ENCODE measurements at regions of chr10 and their contacts with region 1.

Region 1: GRCh38 chr10:70146489-70147258 is at the start of gene TYSND1:
- DNase-seq: peak; percentile 100
- H3K4me3 ChIP-seq: peak within 1 kb of the TSS; percentile 74
- H3K4me3 Mint-ChIP-seq: peak within 1 kb of the TSS; percentile 98
- H3K27ac Mint-ChIP-seq: peak within 1 kb of the TSS; percentile 68
- H3K4me1 ChIP-seq: peaks cover 15% of the 10 kb centered on the region; the same call in 1 of the 2 replicates
- H3K4me1 Mint-ChIP-seq: peaks cover 8% of the 10 kb centered on the region
- H3K27me3 ChIP-seq: no peaks in the 10 kb centered on the region
- H3K27me3 Mint-ChIP-seq: no peaks in the 10 kb centered on the region
- CTCF ChIP-seq: peak; percentile 67 to 98
- total RNA-seq, gene TYSND1: 29.4 and 29.8 TPM in 2 replicates

Region 2: GRCh38 chr10:69885379-69886013 is 261.2 kb before region 1 on chr10:
- CTCF ChIA-PET with region 1: interaction called, 10 read pairs
- POLR2A ChIA-PET with region 1: no interaction called
- intact Hi-C with region 1: no loop called
- DNase-seq: peak in 1 of 2 experiments; percentile 44
- H3K4me3 ChIP-seq: no peak overlapping the region
- H3K4me3 Mint-ChIP-seq: no peak overlapping the region
- H3K27ac Mint-ChIP-seq: no peak overlapping the region
- H3K4me1 ChIP-seq: no peaks in the 10 kb centered on the region
- H3K4me1 Mint-ChIP-seq: peaks cover 20% of the 10 kb centered on the region
- H3K27me3 ChIP-seq: no peaks in the 10 kb centered on the region
- H3K27me3 Mint-ChIP-seq: peaks cover 10% of the 10 kb centered on the region
- CTCF ChIP-seq: peak; percentile 61 to 76

Region 3: DNA sequence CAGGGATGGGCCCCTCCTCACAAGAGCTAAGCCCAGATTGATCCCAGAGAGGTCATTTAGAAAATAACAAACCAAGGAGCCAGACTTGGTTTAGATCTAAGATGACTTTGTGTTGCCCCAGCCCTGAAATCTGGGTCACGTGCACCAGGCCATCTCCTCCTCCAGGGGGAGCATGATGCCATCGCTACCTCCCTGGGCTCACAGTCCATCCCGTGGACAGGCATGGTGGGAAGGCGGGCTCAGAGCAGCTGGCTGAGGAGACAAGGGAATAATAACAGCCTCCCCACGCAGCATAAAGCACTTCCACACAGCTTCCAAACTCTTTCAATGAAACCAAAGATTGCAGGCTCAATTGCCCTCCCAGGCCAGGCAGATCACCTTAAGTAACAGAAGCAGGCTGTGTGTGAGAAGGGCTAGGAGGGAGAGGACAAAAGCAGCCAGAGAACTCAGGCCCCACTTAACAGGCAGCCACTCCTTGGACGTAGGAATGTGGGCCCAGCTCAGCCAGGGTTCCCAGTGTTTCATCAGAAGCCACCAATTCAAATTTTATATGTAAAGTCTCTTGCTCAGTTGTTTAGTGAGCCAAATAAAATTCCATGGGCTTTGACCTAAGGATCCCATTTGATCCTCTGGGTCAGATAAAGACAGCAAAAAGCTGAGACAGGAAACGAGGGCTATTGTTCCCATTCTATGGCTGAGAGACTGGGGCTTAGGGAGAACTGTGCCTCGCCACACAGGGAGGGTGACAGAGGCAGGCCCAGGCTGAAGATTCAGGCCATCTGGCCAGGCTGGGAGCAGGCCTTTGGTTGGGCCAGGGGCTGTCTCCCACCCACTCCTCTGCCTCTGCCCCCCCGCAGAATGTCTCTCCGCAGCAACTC is 244.8 kb before region 1 on chr10:
- CTCF ChIA-PET with region 1: no interaction called
- POLR2A ChIA-PET with region 1: no interaction called
- intact Hi-C with region 1: no loop called
- DNase-seq: peak; percentile 85 to 88
- H3K4me3 ChIP-seq: no peak overlapping the region
- H3K4me3 Mint-ChIP-seq: no peak overlapping the region
- H3K27ac Mint-ChIP-seq: no peak overlapping the region
- H3K4me1 ChIP-seq: peaks cover 37% of the 10 kb centered on the region
- H3K4me1 Mint-ChIP-seq: peaks cover 29% of the 10 kb centered on the region
- H3K27me3 ChIP-seq: no peaks in the 10 kb centered on the region
- H3K27me3 Mint-ChIP-seq: no peaks in the 10 kb centered on the region
- CTCF ChIP-seq: peak; percentile 91 to 94

Region 4: GRCh38 chr10:70084189-70084588 is 62.5 kb before region 1 on chr10:
- CTCF ChIA-PET with region 1: interaction called, 124 read pairs
- POLR2A ChIA-PET with region 1: interaction called, 20 read pairs
- intact Hi-C with region 1: loop called (anchors 1 kb)
- DNase-seq: peak; percentile 45 to 53
- H3K4me3 ChIP-seq: no peak overlapping the region
- H3K4me3 Mint-ChIP-seq: no peak overlapping the region
- H3K27ac Mint-ChIP-seq: no peak overlapping the region
- H3K4me1 ChIP-seq: peaks cover 46% of the 10 kb centered on the region
- H3K4me1 Mint-ChIP-seq: peaks cover 30% of the 10 kb centered on the region
- H3K27me3 ChIP-seq: no peaks in the 10 kb centered on the region
- H3K27me3 Mint-ChIP-seq: peaks cover 6% of the 10 kb centered on the region
- CTCF ChIP-seq: peak; percentile 25 to 52

Region 5: DNA sequence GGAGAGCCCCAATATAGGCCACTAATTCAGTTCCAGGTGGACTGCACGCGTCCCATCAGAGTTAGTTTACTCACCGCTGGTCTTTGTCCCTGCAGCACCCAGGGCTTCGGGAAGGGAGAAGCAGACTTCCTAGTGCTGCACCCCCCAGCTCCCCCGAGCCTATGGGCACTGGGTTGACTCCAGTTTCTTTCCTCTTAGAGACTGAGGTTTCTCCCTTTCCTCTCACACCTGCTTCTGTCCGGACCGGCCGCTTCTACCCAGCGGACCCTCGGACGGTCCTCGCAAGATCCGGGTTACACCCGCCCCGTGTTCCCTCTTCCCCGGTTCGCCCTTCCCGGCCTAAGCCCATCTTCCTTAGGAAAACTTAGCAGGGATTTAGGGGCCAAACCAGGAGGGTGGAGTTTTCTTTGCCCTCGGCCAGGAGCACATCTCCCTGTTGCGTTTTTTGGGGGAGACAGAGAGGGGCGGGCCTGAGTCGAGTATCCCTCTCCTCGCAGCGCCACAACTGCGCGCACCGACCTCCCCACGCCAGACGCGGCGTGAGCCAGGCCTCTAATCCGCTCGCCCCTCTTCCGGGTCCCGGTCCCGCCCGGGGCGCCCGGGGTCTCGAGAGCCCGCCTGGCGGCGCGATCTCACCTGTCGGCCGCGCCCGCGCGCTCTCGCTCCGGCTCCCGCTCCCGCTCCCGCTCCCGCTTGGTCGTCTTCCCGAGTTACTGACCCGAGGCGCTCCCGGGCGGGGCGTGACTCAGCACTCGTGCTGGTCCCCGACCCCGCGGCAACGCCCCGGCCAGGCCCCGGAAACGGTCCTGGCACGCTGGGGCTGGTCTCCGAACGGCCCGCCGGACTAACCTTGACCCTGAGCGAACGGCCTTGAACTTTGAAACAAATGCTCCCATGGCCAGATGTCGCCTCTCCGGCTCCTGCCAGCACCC is 14.3 kb before region 1 on chr10 and contains the start of gene AIFM2:
- CTCF ChIA-PET with region 1: interaction called, 31 read pairs
- POLR2A ChIA-PET with region 1: interaction called, 18 read pairs
- intact Hi-C with region 1: loop called (anchors 1 kb)
- DNase-seq: peak; percentile 94 to 97
- H3K4me3 ChIP-seq: peak within 1 kb of the TSS; percentile 72
- H3K4me3 Mint-ChIP-seq: peak within 1 kb of the TSS; percentile 81
- H3K27ac Mint-ChIP-seq: peak within 1 kb of the TSS; percentile 78
- H3K4me1 ChIP-seq: peaks cover 21% of the 10 kb centered on the region
- H3K4me1 Mint-ChIP-seq: peaks cover 16% of the 10 kb centered on the region
- H3K27me3 ChIP-seq: no peaks in the 10 kb centered on the region
- H3K27me3 Mint-ChIP-seq: no peaks in the 10 kb centered on the region
- CTCF ChIP-seq: peak in 1 of 2 experiments; percentile 21
- total RNA-seq, gene AIFM2: 29.2 and 31.1 TPM in 2 replicates

Region 6: GRCh38 chr10:70198696-70199466 is 52.2 kb after region 1 on chr10:
- CTCF ChIA-PET with region 1: interaction called, 17 read pairs
- POLR2A ChIA-PET with region 1: interaction called, 6 read pairs
- intact Hi-C with region 1: loop called (anchors 1 kb)
- DNase-seq: peak in 1 of 2 experiments; percentile 31
- H3K4me3 ChIP-seq: no peak overlapping the region
- H3K4me3 Mint-ChIP-seq: no peak overlapping the region
- H3K27ac Mint-ChIP-seq: no peak overlapping the region
- H3K4me1 ChIP-seq: no peaks in the 10 kb centered on the region
- H3K4me1 Mint-ChIP-seq: no peaks in the 10 kb centered on the region
- H3K27me3 ChIP-seq: no peaks in the 10 kb centered on the region
- H3K27me3 Mint-ChIP-seq: no peaks in the 10 kb centered on the region
- CTCF ChIP-seq: peak in 1 of 2 experiments; percentile 40

Region 7: GRCh38 chr10:70363971-70364771 is 217.5 kb after region 1 on chr10:
- CTCF ChIA-PET with region 1: interaction called, 20 read pairs
- POLR2A ChIA-PET with region 1: interaction called, 8 read pairs
- intact Hi-C with region 1: loop called (anchors 2 kb)
- DNase-seq: peak; percentile 94 to 97
- H3K4me3 ChIP-seq: no peak overlapping the region
- H3K4me3 Mint-ChIP-seq: no peak overlapping the region
- H3K27ac Mint-ChIP-seq: peak overlapping the region; percentile 33
- H3K4me1 ChIP-seq: peaks cover 16% of the 10 kb centered on the region
- H3K4me1 Mint-ChIP-seq: peaks cover 28% of the 10 kb centered on the region
- H3K27me3 ChIP-seq: no peaks in the 10 kb centered on the region
- H3K27me3 Mint-ChIP-seq: no peaks in the 10 kb centered on the region
- CTCF ChIP-seq: peak; percentile 98 to 99